Activated T-helper 1 cell treated with anti-CD3 and anti-CD28 coated beads, Interleukin-12 subunit alpha, Interleukin-12 subunit beta, Interleukin-2, Interleukin-4 antibody, amounts not matched to agents 30 ng/mL and 10 ng/mL and 1 ng/mL, durations not matched to agents 14 hours and 24 hours and 36 hours (primary cell): ENCODE measurements at regions of chr12 and their contacts with region 1.

Region 1: GRCh38 chr12:91326058-91327027 is 143.7 kb upstream of the DCN start:
- DNase-seq: peak; percentile 3
- H3K4me3 Mint-ChIP-seq: no peak overlapping the region
- H3K27ac Mint-ChIP-seq: no peak overlapping the region
- H3K4me1 Mint-ChIP-seq: no peaks in the 10 kb centered on the region
- H3K27me3 Mint-ChIP-seq: peaks cover 2% of the 10 kb centered on the region

Region 2: GRCh38 chr12:90979951-90980350 is 346.4 kb before region 1 on chr12:
- intact Hi-C with region 1: loop called (anchors 1 kb)
- DNase-seq: no peak
- H3K4me3 Mint-ChIP-seq: no peak overlapping the region
- H3K27ac Mint-ChIP-seq: no peak overlapping the region
- H3K4me1 Mint-ChIP-seq: no peaks in the 10 kb centered on the region
- H3K27me3 Mint-ChIP-seq: no peaks in the 10 kb centered on the region

Region 3: GRCh38 chr12:91053951-91054715 is 272.2 kb before region 1 on chr12:
- intact Hi-C with region 1: no loop called
- DNase-seq: no peak
- H3K4me3 Mint-ChIP-seq: no peak overlapping the region
- H3K27ac Mint-ChIP-seq: no peak overlapping the region
- H3K4me1 Mint-ChIP-seq: no peaks in the 10 kb centered on the region
- H3K27me3 Mint-ChIP-seq: no peaks in the 10 kb centered on the region

Region 4: GRCh38 chr12:91178139-91178561 is 148.2 kb before region 1 on chr12:
- intact Hi-C with region 1: loop called (anchors 1 kb)
- DNase-seq: no peak
- H3K4me3 Mint-ChIP-seq: no peak overlapping the region
- H3K27ac Mint-ChIP-seq: no peak overlapping the region
- H3K4me1 Mint-ChIP-seq: no peaks in the 10 kb centered on the region
- H3K27me3 Mint-ChIP-seq: no peaks in the 10 kb centered on the region